AG04449 (cell line): ENCODE measurements at regions of chr14 and their contacts with region 1.

Region 1: GRCh38 chr14:77457522-77458290 is at the starts of genes AHSA1 and VIPAS39:
- DNase-seq: peak; percentile 96
- H3K4me3 ChIP-seq: peak within 1 kb of the TSS; percentile 98
- CTCF ChIP-seq: no peak

Region 2: GRCh38 chr14:76918751-76919543 is 538.8 kb before region 1 on chr14:
- CTCF ChIA-PET with region 1: no interaction called
- POLR2A ChIA-PET with region 1: no interaction called
- DNase-seq: peak; percentile 92
- H3K4me3 ChIP-seq: peak overlapping the region; percentile 39
- CTCF ChIP-seq: peak; percentile 27

Region 3: DNA sequence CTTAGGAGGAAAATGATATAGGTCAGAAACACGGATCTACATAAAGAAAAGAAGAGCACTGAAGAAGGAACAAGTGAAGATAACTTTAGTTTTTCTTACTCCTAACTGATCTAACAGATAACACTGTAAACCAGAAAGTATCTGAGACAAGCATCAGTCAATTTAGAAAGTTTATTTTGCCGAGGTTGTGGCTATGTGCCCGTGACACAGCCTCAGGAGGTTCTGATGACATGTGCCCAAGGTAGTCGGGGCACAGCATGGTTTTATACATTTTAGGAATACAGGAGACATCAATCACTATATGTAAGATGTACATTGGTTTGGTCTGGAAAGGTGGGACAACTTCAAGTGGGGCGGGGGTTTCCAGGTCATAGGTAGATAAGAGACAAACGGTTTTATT is 57.5 kb before region 1 on chr14:
- CTCF ChIA-PET with region 1: no interaction called
- POLR2A ChIA-PET with region 1: no interaction called
- DNase-seq: no peak
- H3K4me3 ChIP-seq: no peak overlapping the region
- CTCF ChIP-seq: no peak

Region 4: GRCh38 chr14:77438596-77438995 is 19.1 kb before region 1 on chr14:
- CTCF ChIA-PET with region 1: interaction called, 10 read pairs
- POLR2A ChIA-PET with region 1: no interaction called
- DNase-seq: no peak
- H3K4me3 ChIP-seq: no peak overlapping the region
- CTCF ChIP-seq: no peak

Region 5: GRCh38 chr14:77469539-77469938 is 11.8 kb after region 1 on chr14:
- CTCF ChIA-PET with region 1: interaction called, 38 read pairs
- POLR2A ChIA-PET with region 1: no interaction called
- DNase-seq: no peak
- H3K4me3 ChIP-seq: no peak overlapping the region
- CTCF ChIP-seq: no peak

Region 6: DNA sequence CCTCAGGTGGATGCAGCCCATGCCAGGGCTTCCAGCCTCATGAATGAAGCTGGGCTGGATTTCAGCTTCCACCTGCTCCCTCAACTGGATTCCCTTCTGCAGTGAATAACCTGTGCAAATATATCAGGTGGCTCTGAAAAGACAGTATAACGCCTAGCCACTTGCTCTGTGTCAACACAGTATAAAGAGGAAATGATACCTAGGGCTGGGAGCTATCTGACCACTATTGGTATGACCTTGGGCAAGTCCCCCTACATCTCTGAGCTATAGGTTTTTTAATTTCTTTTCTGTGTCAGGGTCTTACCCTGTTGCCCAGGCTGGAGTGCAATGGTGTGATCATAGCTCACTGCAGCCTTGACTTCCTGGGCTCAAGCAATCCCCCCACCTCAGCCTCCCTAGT is 21.1 kb after region 1 on chr14:
- CTCF ChIA-PET with region 1: interaction called, 17 read pairs
- POLR2A ChIA-PET with region 1: no interaction called
- DNase-seq: no peak
- H3K4me3 ChIP-seq: no peak overlapping the region
- CTCF ChIP-seq: no peak

Region 7: DNA sequence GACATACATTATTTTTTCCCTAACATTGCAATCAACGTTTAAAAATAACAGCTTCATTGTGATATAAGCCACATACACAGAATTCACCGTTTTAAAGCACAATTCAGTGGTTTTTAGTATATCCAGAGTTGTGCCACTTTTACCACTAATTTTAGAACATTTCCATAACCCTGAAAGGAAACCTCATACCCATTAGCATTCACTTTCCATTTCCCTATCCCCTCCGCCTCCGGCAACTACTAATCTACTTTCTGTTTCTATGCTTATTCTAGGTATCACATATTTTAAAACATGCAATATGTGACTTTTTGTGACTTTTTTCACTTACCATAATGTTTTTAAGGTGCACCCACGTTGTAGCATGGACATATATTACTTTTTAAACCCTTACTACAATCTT is 96.5 kb after region 1 on chr14:
- CTCF ChIA-PET with region 1: interaction called, 43 read pairs
- POLR2A ChIA-PET with region 1: no interaction called
- DNase-seq: no peak
- H3K4me3 ChIP-seq: no peak overlapping the region
- CTCF ChIP-seq: no peak

Region 8: DNA sequence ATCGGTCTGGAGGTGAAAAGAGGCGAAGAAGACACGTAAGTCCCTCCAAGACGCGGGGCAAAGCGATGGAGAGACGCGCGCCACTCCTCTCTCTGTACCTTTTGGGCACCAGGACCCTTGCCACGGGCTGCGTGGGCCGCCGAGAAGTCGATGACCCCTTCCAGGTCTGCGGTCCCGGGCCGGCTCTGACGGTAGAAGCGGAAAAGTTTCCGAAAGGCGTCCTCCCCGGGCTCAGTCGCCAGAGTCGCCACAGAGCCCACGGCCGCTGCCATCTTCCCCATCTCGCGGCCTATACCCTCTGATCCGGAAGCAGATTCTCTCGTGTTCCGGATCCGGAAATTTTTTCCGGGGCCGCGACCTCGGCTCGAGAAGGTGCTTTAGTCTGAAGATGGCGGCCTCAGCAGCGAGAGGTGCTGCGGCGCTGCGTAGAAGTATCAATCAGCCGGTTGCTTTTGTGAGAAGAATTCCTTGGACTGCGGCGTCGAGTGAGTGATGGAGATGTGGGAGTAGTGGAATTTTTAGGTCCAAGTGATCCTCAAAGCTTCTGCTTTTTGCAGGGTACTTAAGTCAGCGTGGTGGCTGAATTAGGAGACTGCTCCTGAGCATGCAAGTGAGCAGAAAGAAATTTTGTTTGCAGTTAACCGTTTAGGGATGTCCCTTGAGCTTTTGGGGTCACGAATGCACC is 250.2 kb after region 1 on chr14 and contains the starts of genes ALKBH1 and SLIRP:
- CTCF ChIA-PET with region 1: interaction called, 17 read pairs
- POLR2A ChIA-PET with region 1: no interaction called
- DNase-seq: peak; percentile 2
- H3K4me3 ChIP-seq: peak within 1 kb of the TSS; percentile 98
- CTCF ChIP-seq: no peak